ENCODE measurements at regions of chr12 and their contacts with region 1.

Region 1: GRCh38 chr12:91811481-91812287 is 334.0 kb downstream of the BTG1 start:
- DNase-seq: peak; percentile 82
- ATAC-seq: peak; percentile 68
- H3K4me3 Mint-ChIP-seq: no peak overlapping the region
- H3K27ac Mint-ChIP-seq: peak overlapping the region; percentile 8
- H3K4me1 Mint-ChIP-seq: peaks cover 17% of the 10 kb centered on the region
- H3K27me3 Mint-ChIP-seq: no peaks in the 10 kb centered on the region

Region 2: GRCh38 chr12:91382081-91382543 is 429.6 kb before region 1 on chr12:
- CTCF ChIA-PET with region 1: interaction called, 13 read pairs
- POLR2A ChIA-PET with region 1: no interaction called
- intact Hi-C with region 1: loop called in 1 of 2 experiments (anchors 10 kb)
- DNase-seq: peak; percentile 90
- ATAC-seq: peak; percentile 81
- H3K4me3 Mint-ChIP-seq: peak overlapping the region; percentile 70
- H3K27ac Mint-ChIP-seq: no peak overlapping the region
- H3K4me1 Mint-ChIP-seq: peaks cover 7% of the 10 kb centered on the region
- H3K27me3 Mint-ChIP-seq: peaks cover 3% of the 10 kb centered on the region

Region 3: DNA sequence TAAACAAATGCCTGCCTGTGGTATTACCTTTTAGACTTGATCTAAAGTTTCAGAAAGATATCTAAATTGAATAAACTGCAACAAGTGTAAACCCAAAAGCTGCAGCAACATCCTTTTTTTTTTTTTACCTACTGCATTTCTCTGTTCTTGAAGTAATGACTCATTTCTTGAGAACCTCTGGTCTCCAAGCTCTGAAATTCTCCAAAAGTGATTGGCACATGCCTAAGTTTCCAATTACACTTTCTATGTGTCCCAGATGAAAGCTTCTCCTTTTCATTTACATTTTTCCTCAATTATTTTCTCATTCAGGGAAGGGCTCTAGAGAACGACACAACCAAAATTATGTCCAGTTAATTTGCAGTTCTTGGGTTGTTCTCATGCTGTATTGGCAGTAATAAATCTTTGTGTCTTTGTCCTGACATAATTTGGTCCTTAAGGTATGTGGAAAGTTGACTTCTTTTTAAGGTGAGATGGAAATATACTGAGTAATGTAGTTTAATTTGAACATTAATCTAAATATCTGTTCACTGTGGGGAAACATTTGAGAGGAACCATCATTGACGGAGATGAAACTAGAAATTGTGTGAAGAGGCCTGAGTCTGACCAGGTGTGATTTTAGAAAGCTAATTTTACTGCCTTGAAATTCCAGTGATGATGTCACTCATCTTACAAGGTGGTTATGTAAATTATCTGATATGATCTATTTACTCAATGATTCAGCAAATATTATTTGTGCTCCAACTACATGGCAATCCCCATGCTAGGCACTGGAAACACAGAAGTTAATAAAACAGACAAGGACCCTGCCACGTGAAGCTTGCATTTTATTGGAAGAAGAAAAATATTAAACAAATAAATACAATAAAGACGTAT is 193.6 kb before region 1 on chr12:
- CTCF ChIA-PET with region 1: no interaction called
- POLR2A ChIA-PET with region 1: no interaction called
- intact Hi-C with region 1: no loop called
- DNase-seq: no peak
- ATAC-seq: no peak
- H3K4me3 Mint-ChIP-seq: no peak overlapping the region
- H3K27ac Mint-ChIP-seq: no peak overlapping the region
- H3K4me1 Mint-ChIP-seq: peaks cover 6% of the 10 kb centered on the region
- H3K27me3 Mint-ChIP-seq: no peaks in the 10 kb centered on the region

Region 4: GRCh38 chr12:91825999-91826398 is 14.3 kb after region 1 on chr12:
- CTCF ChIA-PET with region 1: interaction called, 27 read pairs
- POLR2A ChIA-PET with region 1: no interaction called
- intact Hi-C with region 1: no loop called
- DNase-seq: no peak
- ATAC-seq: no peak
- H3K4me3 Mint-ChIP-seq: no peak overlapping the region
- H3K27ac Mint-ChIP-seq: no peak overlapping the region
- H3K4me1 Mint-ChIP-seq: no peaks in the 10 kb centered on the region
- H3K27me3 Mint-ChIP-seq: no peaks in the 10 kb centered on the region

Region 5: GRCh38 chr12:91841822-91842221 is 30.1 kb after region 1 on chr12:
- CTCF ChIA-PET with region 1: interaction called, 10 read pairs
- POLR2A ChIA-PET with region 1: no interaction called
- intact Hi-C with region 1: no loop called
- DNase-seq: no peak
- ATAC-seq: peak; percentile 42
- H3K4me3 Mint-ChIP-seq: no peak overlapping the region
- H3K27ac Mint-ChIP-seq: no peak overlapping the region
- H3K4me1 Mint-ChIP-seq: peaks cover 9% of the 10 kb centered on the region
- H3K27me3 Mint-ChIP-seq: no peaks in the 10 kb centered on the region

Region 6: GRCh38 chr12:92253301-92253700 is 441.6 kb after region 1 on chr12:
- CTCF ChIA-PET with region 1: no interaction called
- POLR2A ChIA-PET with region 1: no interaction called
- intact Hi-C with region 1: no loop called
- DNase-seq: no peak
- ATAC-seq: no peak
- H3K4me3 Mint-ChIP-seq: no peak overlapping the region
- H3K27ac Mint-ChIP-seq: no peak overlapping the region
- H3K4me1 Mint-ChIP-seq: peaks cover 13% of the 10 kb centered on the region
- H3K27me3 Mint-ChIP-seq: no peaks in the 10 kb centered on the region

Region 7: DNA sequence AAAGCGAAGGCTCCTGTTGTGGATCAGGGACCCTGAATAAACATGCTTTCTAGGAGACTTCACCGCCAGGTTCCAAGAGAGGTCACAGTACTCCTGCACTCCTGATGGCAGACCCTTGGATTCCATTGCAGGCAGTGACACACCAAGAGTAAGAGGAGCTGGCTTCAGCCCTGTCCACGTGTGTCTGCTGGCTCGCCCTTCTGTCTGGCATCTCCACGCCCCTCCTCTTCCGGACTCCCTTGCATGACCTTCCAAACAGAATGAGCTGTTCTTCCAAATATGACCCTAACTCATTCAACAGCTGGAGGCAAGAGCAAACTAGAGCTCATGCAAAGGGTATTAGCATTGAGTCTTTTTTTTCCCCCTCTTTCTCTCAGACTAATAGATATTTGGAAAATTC is 658.2 kb after region 1 on chr12:
- CTCF ChIA-PET with region 1: no interaction called
- POLR2A ChIA-PET with region 1: no interaction called
- intact Hi-C with region 1: loop called in 1 of 2 experiments (anchors 1 kb)
- DNase-seq: no peak
- ATAC-seq: no peak
- H3K4me3 Mint-ChIP-seq: no peak overlapping the region
- H3K27ac Mint-ChIP-seq: peak overlapping the region; percentile 85
- H3K4me1 Mint-ChIP-seq: peaks cover 48% of the 10 kb centered on the region
- H3K27me3 Mint-ChIP-seq: no peaks in the 10 kb centered on the region

Measured in activated CD4-positive, alpha-beta T cell treated with anti-CD3 and anti-CD28 coated beads for 36 hours (primary cell).